ENCODE measurements at regions of chr6 and their contacts with region 1.

Region 1: GRCh38 chr6:48641544-48641943 is 530.5 kb upstream of the PTCHD4 start:
- DNase-seq: peak in 1 of 2 experiments; percentile 39
- H3K4me3 ChIP-seq: no peak overlapping the region
- H3K27ac ChIP-seq: no peak overlapping the region
- H3K4me1 ChIP-seq: no peaks in the 10 kb centered on the region
- H3K27me3 ChIP-seq: no peaks in the 10 kb centered on the region
- CTCF ChIP-seq: no peak

Region 2: GRCh38 chr6:48151142-48151541 is 490.4 kb before region 1 on chr6:
- CTCF ChIA-PET with region 1: no interaction called
- POLR2A ChIA-PET with region 1: interaction called, 10 read pairs
- intact Hi-C with region 1: no loop called
- DNase-seq: peak in 1 of 2 experiments; percentile 63
- H3K4me3 ChIP-seq: no peak overlapping the region
- H3K27ac ChIP-seq: peak overlapping the region; percentile 28; the same call in 1 of the 2 replicates
- H3K4me1 ChIP-seq: no peaks in the 10 kb centered on the region; the same call in 1 of the 2 replicates
- H3K27me3 ChIP-seq: no peaks in the 10 kb centered on the region
- CTCF ChIP-seq: no peak